G401 (cell line): ENCODE measurements at regions of chr14 and their contacts with region 1.

Region 1: DNA sequence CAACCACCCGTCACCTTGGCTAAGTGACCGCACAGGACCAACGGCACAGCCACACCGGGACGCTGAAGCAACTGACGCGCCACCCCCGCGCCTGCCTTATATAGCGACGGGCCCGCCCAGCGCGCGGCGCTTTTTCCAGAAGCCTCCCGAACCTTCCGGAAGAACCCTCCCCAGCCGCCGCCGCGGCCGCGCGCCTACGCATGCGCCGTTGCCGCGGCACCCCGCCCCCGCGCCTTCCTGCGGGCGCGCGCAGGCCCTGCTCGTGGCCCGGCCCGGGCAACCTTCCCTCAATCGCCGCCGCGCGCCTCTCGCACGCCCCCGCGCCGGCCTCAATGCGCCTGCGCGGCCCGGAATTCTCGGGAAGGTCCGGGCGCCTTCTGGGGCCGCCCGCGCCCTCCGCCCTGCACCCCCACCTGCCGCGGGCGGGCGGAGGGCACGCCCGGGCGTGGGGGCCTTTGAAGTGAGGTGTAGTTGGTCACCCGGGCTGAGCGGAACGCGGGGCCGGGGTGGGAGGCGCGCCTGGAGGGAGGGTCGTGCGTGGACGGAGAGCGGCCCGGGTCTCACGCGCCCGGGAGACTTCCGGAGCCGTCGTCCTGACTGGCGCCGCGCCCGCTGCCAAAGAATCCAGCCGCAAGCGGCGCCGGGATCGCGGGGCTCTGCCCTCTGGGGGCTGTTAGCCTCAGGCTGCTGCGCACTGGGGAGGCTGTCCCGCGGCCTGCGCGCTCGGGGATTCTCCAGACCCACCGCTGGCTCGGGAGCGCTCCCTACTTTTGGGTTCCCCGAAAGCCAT is at the start of gene HSP90AA1:
- DNase-seq: peak; percentile 83
- total RNA-seq, gene HSP90AA1: 161 and 248 TPM in 2 replicates

Region 2: DNA sequence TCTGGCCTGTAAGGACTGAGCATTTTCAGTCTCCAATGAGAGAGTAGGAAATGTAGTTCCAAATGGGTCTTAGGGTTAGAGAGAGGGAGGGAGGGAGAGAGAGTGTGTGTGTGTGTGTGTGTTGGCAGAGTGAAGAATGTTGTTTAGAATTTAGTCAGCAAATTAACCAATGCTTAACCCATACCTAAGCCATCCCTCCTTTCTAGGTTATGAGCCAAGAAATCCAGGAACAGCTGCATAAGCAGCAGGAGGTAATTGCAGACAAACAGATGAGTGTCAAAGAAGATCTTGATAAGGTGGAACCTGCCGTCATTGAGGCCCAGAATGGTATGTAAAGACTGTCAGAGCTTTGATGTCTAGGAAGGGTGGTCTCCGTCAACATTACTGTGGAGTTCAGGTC is 57.2 kb before region 1 on chr14:
- in situ Hi-C with region 1: loop called (anchors 10 kb)
- DNase-seq: no peak

Region 3: GRCh38 chr14:102164241-102164641 is 77.1 kb after region 1 on chr14:
- in situ Hi-C with region 1: no loop called
- DNase-seq: no peak

Region 4: GRCh38 chr14:102316743-102317563 is 229.8 kb after region 1 on chr14:
- in situ Hi-C with region 1: loop called (anchors 25 kb)
- DNase-seq: peak; percentile 93